CD4-positive, alpha-beta T cell (primary cell): ENCODE measurements at regions of chr21 and their contacts with region 1.

Region 1: GRCh38 chr21:45709173-45709572 is 65.6 kb downstream of the PCBP3 start:
- DNase-seq: no peak
- ATAC-seq: no peak
- H3K4me3 ChIP-seq: no peak overlapping the region
- H3K4me3 Mint-ChIP-seq: no peak overlapping the region
- H3K27ac ChIP-seq: no peak overlapping the region
- H3K27ac Mint-ChIP-seq: no peak overlapping the region
- H3K4me1 ChIP-seq: no peaks in the 10 kb centered on the region
- H3K4me1 Mint-ChIP-seq: no peaks in the 10 kb centered on the region
- H3K27me3 ChIP-seq: no peaks in the 10 kb centered on the region
- H3K27me3 Mint-ChIP-seq: no peaks in the 10 kb centered on the region
- CTCF ChIP-seq: no peak

Region 2: DNA sequence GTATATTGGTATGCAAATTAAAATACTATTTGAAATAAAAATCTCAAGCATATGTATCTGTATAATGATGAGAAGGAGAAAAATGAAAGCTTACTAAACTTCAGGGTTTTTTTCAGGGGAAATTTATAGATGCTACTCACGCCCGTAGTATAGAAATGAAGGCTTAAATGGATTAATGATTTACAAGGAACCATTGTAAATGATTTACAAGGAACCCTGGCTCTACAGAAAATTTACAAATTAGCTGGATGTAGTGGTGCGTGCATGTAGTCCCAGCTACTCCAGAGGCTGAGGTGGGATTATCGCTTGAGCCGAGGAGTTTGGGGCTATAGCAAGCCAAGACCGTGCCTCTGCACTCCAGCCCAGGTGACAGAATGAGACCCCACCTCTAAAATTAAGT is 84.9 kb after region 1 on chr21:
- CTCF ChIA-PET with region 1: no interaction called
- POLR2A ChIA-PET with region 1: no interaction called
- intact Hi-C with region 1: loop called in 1 of 2 experiments (anchors 5 kb)
- DNase-seq: no peak
- ATAC-seq: no peak
- H3K4me3 ChIP-seq: no peak overlapping the region
- H3K4me3 Mint-ChIP-seq: no peak overlapping the region
- H3K27ac ChIP-seq: no peak overlapping the region
- H3K27ac Mint-ChIP-seq: no peak overlapping the region
- H3K4me1 ChIP-seq: no peaks in the 10 kb centered on the region
- H3K4me1 Mint-ChIP-seq: no peaks in the 10 kb centered on the region
- H3K27me3 ChIP-seq: no peaks in the 10 kb centered on the region
- H3K27me3 Mint-ChIP-seq: no peaks in the 10 kb centered on the region
- CTCF ChIP-seq: no peak